Naive thymus-derived CD4-positive, alpha-beta T cell (primary cell): ENCODE measurements at regions of chr3 and their contacts with region 1.

Region 1: DNA sequence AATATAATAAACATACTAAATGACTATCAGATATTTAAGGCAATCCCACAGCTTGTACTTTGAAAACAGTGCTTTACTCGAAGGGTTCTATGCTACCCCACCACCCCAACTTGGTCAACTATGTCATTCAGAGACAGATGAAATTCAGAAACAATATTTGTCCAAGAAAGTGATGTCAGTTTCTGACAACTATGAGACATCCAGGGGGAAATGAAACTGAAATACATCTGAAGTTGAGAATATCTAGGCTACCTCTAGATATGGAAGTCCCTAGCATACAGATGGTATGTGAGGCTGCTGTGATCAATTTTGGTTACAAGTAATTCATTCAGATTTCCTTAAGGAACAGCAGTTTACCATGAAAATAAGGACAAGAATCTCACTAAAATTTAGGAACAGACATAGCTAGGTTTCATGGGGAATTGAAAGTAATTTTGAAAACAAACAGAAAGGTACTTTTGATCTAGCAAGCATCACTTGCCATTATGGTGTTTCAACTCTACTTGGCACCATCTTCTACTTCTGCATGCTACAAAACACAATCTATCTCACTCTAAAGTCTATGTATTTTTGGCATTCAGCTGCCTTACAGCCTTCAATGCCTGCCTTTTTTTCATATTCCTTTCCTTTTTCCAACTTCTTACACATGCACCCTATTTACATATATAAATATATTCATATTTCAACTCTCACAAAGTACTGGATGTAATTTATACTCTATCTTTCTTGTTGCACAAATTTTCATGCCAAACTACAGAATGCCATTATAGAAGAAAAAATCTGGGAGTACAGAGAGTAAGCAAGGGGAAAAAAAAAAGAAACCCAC is 21.7 kb downstream of the ATG3 start:
- DNase-seq: no peak
- ATAC-seq: no peak
- H3K4me3 ChIP-seq: no peak overlapping the region
- H3K4me3 Mint-ChIP-seq: no peak overlapping the region
- H3K27ac ChIP-seq: no peak overlapping the region
- H3K27ac Mint-ChIP-seq: peak overlapping the region in 4 of 9 donors; percentile 32 to 69 (median 52)
- H3K4me1 ChIP-seq: no peaks in the 10 kb centered on the region
- H3K4me1 Mint-ChIP-seq: peaks cover 2 to 22% (median 12%) of the 10 kb centered on the region in 7 donors
- H3K27me3 ChIP-seq: no peaks in the 10 kb centered on the region
- H3K27me3 Mint-ChIP-seq: no peaks in the 10 kb centered on the region

Region 2: DNA sequence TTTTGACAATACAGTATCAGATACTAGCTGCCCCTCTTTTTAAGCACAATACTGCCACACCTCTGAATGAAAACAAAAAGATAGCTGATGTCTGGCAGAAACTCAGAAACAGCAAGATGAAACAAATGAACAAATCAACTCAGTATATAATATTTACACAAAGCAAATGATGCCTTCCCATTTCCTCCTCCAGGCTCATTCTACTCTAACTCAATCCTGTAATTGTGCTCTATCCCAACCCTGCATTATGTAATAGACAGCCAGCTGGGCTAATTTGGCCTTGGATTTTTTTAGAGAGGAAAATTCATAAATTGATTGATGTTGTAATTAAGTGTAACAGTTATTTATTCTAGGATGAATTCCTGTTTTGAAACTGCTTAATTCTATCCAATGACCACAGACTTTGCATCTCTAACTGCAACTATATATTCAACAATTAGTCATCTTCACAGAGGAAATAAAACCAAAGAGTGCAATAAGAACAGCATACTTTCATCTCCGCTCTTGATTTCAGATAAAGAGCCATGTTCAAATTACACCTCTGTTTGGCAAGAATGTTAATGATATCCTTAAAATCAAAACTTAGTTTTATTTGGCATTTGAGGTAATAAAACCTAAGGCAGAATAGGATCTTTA is 15.6 kb after region 1 on chr3:
- CTCF ChIA-PET with region 1: interaction called, 3 read pairs
- POLR2A ChIA-PET with region 1: interaction called, 24 read pairs
- intact Hi-C with region 1: loop called in 1 of 2 experiments (anchors 1 kb)
- DNase-seq: no peak
- ATAC-seq: peak; percentile 54
- H3K4me3 ChIP-seq: no peak overlapping the region
- H3K4me3 Mint-ChIP-seq: peak overlapping the region in 4 of 10 donors; percentile 0 to 41 (median 16)
- H3K27ac ChIP-seq: no peak overlapping the region
- H3K27ac Mint-ChIP-seq: peak overlapping the region in 3 of 9 donors; percentile 32 to 52 (median 44)
- H3K4me1 ChIP-seq: peaks cover 8 to 13% of the 10 kb centered on the region in 2 donors
- H3K4me1 Mint-ChIP-seq: peaks cover 39 to 75% (median 68%) of the 10 kb centered on the region in 7 donors
- H3K27me3 ChIP-seq: no peaks in the 10 kb centered on the region
- H3K27me3 Mint-ChIP-seq: no peaks in the 10 kb centered on the region

Region 3: DNA sequence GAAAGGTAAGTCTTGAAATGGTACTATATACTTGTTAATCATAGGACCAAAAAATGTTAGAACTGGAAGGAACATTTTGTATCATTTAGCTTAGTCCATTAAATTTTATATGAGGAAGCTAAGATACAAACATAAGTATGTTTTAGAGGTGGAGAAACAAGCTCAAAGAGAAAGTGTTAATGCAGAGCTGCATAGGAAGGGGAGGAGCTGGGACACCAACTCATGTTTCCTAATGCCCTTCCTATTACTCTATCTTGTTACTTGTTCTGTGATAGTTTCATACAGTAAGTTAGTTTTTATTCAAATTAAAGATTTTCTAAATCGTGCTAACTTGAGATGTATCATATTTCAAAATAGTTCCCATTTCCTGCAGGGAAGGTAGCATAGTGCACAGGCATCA is 29.2 kb after region 1 on chr3:
- CTCF ChIA-PET with region 1: no interaction called
- POLR2A ChIA-PET with region 1: no interaction called
- intact Hi-C with region 1: no loop called
- DNase-seq: no peak
- ATAC-seq: no peak
- H3K4me3 ChIP-seq: no peak overlapping the region
- H3K4me3 Mint-ChIP-seq: no peak overlapping the region
- H3K27ac ChIP-seq: no peak overlapping the region
- H3K27ac Mint-ChIP-seq: peak overlapping the region in 3 of 9 donors; percentile 14 to 61 (median 18)
- H3K4me1 ChIP-seq: no peaks in the 10 kb centered on the region
- H3K4me1 Mint-ChIP-seq: peaks cover 6 to 53% (median 24%) of the 10 kb centered on the region in 7 donors
- H3K27me3 ChIP-seq: no peaks in the 10 kb centered on the region
- H3K27me3 Mint-ChIP-seq: no peaks in the 10 kb centered on the region